ENCODE measurements at regions of chr15 and their contacts with region 1.

Region 1: GRCh38 chr15:92808978-92809879 is 90.9 kb upstream of the CHD2 start:
- DNase-seq: peak; percentile 98
- H3K4me3 ChIP-seq: peak overlapping the region; percentile 41
- H3K27ac ChIP-seq: peak overlapping the region; percentile 93
- H3K4me1 ChIP-seq: peaks cover 26% of the 10 kb centered on the region
- H3K27me3 ChIP-seq: no peaks in the 10 kb centered on the region
- CTCF ChIP-seq: peak; percentile 69

Region 2: DNA sequence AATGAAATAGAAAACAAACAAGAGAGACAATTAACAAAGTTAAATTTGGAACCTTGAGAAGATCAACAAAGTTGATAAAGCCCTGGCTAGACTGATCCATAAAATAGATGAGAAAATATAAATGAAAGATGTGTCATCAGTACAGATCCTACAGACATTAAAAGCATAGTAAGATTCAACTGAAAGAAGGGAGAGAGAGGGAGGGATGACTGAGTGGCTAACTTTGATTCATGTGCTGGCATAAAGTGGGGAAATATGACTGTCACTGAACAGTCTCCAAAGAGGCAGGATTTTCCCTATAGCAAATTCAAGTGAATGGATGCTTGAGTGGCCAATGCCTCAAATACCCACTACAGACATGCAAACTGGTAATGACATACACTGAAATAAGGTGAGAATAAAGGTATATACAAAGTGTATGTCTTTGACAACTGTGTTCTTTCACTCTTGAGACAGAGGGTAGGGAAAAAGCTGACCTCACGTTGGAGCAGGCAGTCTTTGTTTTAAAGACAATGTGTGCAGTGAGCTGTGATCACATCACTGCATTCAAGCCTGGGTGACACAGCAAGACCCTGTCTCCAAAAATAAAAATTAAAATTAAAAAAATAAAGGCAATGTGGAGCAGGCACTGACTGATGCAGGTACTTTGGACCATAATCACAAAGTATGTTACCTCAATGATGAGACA is 55.0 kb after region 1 on chr15:
- CTCF ChIA-PET with region 1: no interaction called
- POLR2A ChIA-PET with region 1: no interaction called
- intact Hi-C with region 1: no loop called
- DNase-seq: no peak
- H3K4me3 ChIP-seq: no peak overlapping the region
- H3K27ac ChIP-seq: no peak overlapping the region
- H3K4me1 ChIP-seq: peaks cover 2% of the 10 kb centered on the region
- H3K27me3 ChIP-seq: no peaks in the 10 kb centered on the region
- CTCF ChIP-seq: no peak

Region 3: GRCh38 chr15:92881802-92882696 is 72.8 kb after region 1 on chr15:
- CTCF ChIA-PET with region 1: interaction called, 16 read pairs
- POLR2A ChIA-PET with region 1: interaction called, 3 read pairs
- intact Hi-C with region 1: loop called (anchors 1 kb)
- DNase-seq: peak; percentile 100
- H3K4me3 ChIP-seq: peak overlapping the region; percentile 91
- H3K27ac ChIP-seq: peak overlapping the region; percentile 85
- H3K4me1 ChIP-seq: peaks cover 20% of the 10 kb centered on the region
- H3K27me3 ChIP-seq: no peaks in the 10 kb centered on the region
- CTCF ChIP-seq: no peak

Region 4: GRCh38 chr15:92903941-92904831 is 95.0 kb after region 1 on chr15:
- CTCF ChIA-PET with region 1: no interaction called
- POLR2A ChIA-PET with region 1: no interaction called
- intact Hi-C with region 1: loop called (anchors 5 kb)
- DNase-seq: peak; percentile 99
- H3K4me3 ChIP-seq: peak overlapping the region; percentile 68
- H3K27ac ChIP-seq: peak overlapping the region; percentile 99
- H3K4me1 ChIP-seq: peaks cover 40% of the 10 kb centered on the region
- H3K27me3 ChIP-seq: no peaks in the 10 kb centered on the region
- CTCF ChIP-seq: no peak

Region 5: GRCh38 chr15:92917606-92918407 is 108.6 kb after region 1 on chr15:
- CTCF ChIA-PET with region 1: interaction called, 6 read pairs
- POLR2A ChIA-PET with region 1: no interaction called
- intact Hi-C with region 1: loop called (anchors 1 kb)
- DNase-seq: peak; percentile 96
- H3K4me3 ChIP-seq: no peak overlapping the region
- H3K27ac ChIP-seq: peak overlapping the region; percentile 79
- H3K4me1 ChIP-seq: peaks cover 34% of the 10 kb centered on the region
- H3K27me3 ChIP-seq: no peaks in the 10 kb centered on the region
- CTCF ChIP-seq: peak; percentile 97

Measured in A673 (cell line).